ENCODE measurements at regions of chr17 and their contacts with region 1.

Region 1: DNA sequence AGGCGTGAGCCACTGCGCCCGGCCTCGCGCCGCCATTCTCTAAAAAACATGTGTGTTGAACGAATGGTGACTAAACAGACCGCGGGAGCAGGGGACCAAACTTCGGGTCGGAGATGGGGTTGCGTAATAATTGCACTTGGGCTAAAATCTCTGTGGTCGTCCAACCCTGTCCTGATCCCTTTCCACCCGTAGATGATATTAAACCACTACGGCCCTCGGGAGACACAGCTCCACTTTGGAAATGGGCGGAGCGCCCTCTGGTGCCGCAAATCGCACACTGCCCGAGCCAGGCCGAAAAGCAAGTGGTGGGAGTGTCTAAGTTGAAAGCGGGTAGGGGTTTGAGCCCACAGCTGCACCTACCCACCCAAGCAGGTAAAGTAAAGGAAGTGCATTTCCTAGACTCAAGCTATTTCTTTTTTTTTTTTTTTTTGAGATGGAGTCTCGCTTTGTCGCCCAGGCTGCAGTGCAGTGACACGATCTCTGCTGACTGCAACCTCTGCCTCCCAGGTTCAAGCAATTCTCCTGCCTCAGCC is 17.0 kb downstream of the CAVIN1 start:
- DNase-seq: peak; percentile 82 to 90
- ATAC-seq: peak; percentile 56 to 67
- H3K4me3 ChIP-seq: no peak overlapping the region
- H3K27ac ChIP-seq: peak overlapping the region in 1 of 2 experiments; percentile 84; a peak in 3 of 6 replicates
- H3K4me1 ChIP-seq: peaks cover 73% of the 10 kb centered on the region
- CTCF ChIP-seq: peak; percentile 97
- EP300 ChIP-seq: no peak
- POLR2A ChIP-seq: no peak
- RAD21 ChIP-seq: peak; percentile 98 to 99

Region 2: GRCh38 chr17:42221937-42222745 is 183.9 kb before region 1 on chr17:
- CTCF ChIA-PET with region 1: interaction called, 26 read pairs
- POLR2A ChIA-PET with region 1: interaction called, 3 read pairs
- DNase-seq: peak; percentile 66 to 74
- ATAC-seq: peak; percentile 87 to 92
- H3K4me3 ChIP-seq: no peak overlapping the region
- H3K27ac ChIP-seq: no peak overlapping the region
- H3K4me1 ChIP-seq: no peaks in the 10 kb centered on the region
- CTCF ChIP-seq: peak; percentile 74
- EP300 ChIP-seq: no peak
- POLR2A ChIP-seq: no peak
- RAD21 ChIP-seq: peak; percentile 74 to 81

Region 3: GRCh38 chr17:42248351-42249179 is 157.5 kb before region 1 on chr17:
- CTCF ChIA-PET with region 1: no interaction called
- POLR2A ChIA-PET with region 1: no interaction called
- DNase-seq: no peak
- ATAC-seq: no peak
- H3K4me3 ChIP-seq: no peak overlapping the region
- H3K27ac ChIP-seq: no peak overlapping the region
- H3K4me1 ChIP-seq: peaks cover 39% of the 10 kb centered on the region
- CTCF ChIP-seq: no peak
- EP300 ChIP-seq: no peak
- POLR2A ChIP-seq: no peak
- RAD21 ChIP-seq: no peak

Region 4: GRCh38 chr17:42337442-42337841 is 68.6 kb before region 1 on chr17:
- CTCF ChIA-PET with region 1: interaction called, 1,360 read pairs
- POLR2A ChIA-PET with region 1: interaction called, 4 read pairs
- DNase-seq: no peak
- ATAC-seq: no peak
- H3K4me3 ChIP-seq: no peak overlapping the region
- H3K27ac ChIP-seq: no peak overlapping the region
- H3K4me1 ChIP-seq: peaks cover 15% of the 10 kb centered on the region
- CTCF ChIP-seq: no peak
- EP300 ChIP-seq: no peak
- POLR2A ChIP-seq: no peak; the same call in 1 of the 2 replicates
- RAD21 ChIP-seq: no peak

Region 5: DNA sequence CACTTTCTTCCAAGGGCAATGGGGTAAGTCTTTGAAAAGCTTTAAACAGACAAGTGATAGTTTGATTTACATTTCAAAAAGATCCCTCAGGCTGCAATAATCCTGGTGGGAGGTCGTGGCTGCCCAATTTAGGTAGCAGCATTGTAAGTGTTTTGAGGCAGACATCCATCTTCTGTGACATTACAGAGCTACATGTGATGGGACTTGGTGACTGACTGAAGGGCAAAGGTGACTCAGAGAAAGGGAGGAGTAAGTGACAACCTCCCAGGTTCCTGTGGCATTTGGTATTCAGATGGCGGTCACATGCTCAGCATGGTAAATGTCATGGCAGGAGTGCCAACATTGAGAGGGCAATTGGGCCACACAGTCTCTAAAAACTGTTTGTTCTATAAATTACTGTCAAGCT is 44.2 kb before region 1 on chr17:
- CTCF ChIA-PET with region 1: interaction called, 15 read pairs
- POLR2A ChIA-PET with region 1: no interaction called
- DNase-seq: peak in 1 of 2 experiments; percentile 39
- ATAC-seq: peak; percentile 48 to 63
- H3K4me3 ChIP-seq: no peak overlapping the region
- H3K27ac ChIP-seq: peak overlapping the region in 1 of 2 experiments; percentile 53; a peak in 3 of 6 replicates
- H3K4me1 ChIP-seq: peaks cover 53% of the 10 kb centered on the region
- CTCF ChIP-seq: no peak
- EP300 ChIP-seq: no peak
- POLR2A ChIP-seq: no peak
- RAD21 ChIP-seq: no peak

Region 6: GRCh38 chr17:42388381-42389134 is 17.5 kb before region 1 on chr17 and contains the start of gene STAT3:
- CTCF ChIA-PET with region 1: interaction called, 189 read pairs
- POLR2A ChIA-PET with region 1: interaction called, 13 read pairs
- DNase-seq: peak; percentile 99 to 100
- ATAC-seq: peak; percentile 94 to 98
- H3K4me3 ChIP-seq: peak within 1 kb of the TSS; percentile 88
- H3K27ac ChIP-seq: peak within 1 kb of the TSS; percentile 94 to 96
- H3K4me1 ChIP-seq: peaks cover 28% of the 10 kb centered on the region
- CTCF ChIP-seq: 0 out of 3 replicates have a peak, but pooled peaks have one; percentile 12
- EP300 ChIP-seq: peak; percentile 48 to 80; a peak in 3 of 5 replicates
- POLR2A ChIP-seq: peak; percentile 81
- RAD21 ChIP-seq: peak; percentile 29 to 56; a peak in 3 of 5 replicates
- polyA plus RNA-seq, gene STAT3: 72.8 and 81.9 TPM in 2 replicates

Region 7: GRCh38 chr17:42428141-42428944 is 22.3 kb after region 1 on chr17:
- CTCF ChIA-PET with region 1: interaction called, 180 read pairs
- POLR2A ChIA-PET with region 1: interaction called, 56 read pairs
- DNase-seq: peak; percentile 97 to 98
- ATAC-seq: peak; percentile 91 to 96
- H3K4me3 ChIP-seq: no peak overlapping the region
- H3K27ac ChIP-seq: peak overlapping the region; percentile 66 to 83
- H3K4me1 ChIP-seq: peaks cover 55% of the 10 kb centered on the region
- CTCF ChIP-seq: peak; percentile 84
- EP300 ChIP-seq: no peak
- POLR2A ChIP-seq: no peak
- RAD21 ChIP-seq: peak; percentile 84 to 86